Activated T-helper 1 cell treated with anti-CD3 and anti-CD28 coated beads, Interleukin-12 subunit alpha, Interleukin-12 subunit beta, Interleukin-2, Interleukin-4 antibody, amounts not matched to agents 30 ng/mL and 10 ng/mL and 1 ng/mL, durations not matched to agents 14 hours and 24 hours and 36 hours (primary cell): ENCODE measurements at regions of chr17 and their contacts with region 1.

Region 1: GRCh38 chr17:27578718-27579085 is 52.3 kb upstream of the LGALS9 start:
- DNase-seq: peak; percentile 62
- H3K4me3 Mint-ChIP-seq: peak overlapping the region; percentile 3
- H3K27ac Mint-ChIP-seq: peak overlapping the region; percentile 90
- H3K4me1 Mint-ChIP-seq: peaks cover 77% of the 10 kb centered on the region
- H3K27me3 Mint-ChIP-seq: no peaks in the 10 kb centered on the region

Region 2: DNA sequence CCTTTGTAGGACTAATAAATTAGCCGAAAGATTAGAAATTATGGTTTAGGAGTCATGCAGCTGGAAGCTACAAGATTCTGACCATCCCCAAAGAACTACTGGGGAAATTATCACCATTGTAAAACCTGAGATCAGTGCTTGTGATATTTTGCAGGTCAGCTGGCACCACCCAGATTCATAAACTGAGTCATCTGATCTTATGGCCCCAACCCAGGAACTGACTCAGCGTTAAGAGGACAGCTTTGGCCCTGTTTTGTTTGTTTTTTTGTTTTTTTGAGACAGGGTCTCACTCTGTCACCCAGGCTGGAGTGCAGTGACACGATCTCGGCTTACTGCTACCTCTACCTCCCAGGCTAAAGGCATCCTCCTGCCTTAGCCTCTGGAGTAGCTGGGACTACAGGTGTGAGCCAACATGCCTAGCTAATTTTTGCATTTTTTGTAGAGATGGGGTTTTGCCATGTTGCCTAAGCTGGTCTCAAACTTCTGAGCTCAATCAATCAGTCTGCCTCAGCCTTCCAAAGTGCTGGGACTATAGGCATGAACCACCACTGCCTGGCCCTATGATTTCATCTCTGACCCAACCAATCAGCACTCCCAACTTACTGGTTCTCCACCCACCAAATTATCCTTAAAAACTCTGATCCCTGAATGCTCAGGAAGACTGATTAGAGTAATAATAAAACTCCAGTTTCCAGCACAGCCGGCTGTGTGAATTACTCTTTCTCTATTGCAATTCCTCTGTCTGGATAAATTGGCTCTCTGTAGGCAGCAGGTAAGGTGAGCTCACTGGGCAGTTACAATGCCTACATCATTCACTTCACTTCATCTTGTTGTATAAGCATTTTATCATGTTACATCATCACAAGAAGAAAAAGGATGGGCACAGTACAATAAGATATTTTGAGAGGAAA is 201.8 kb before region 1 on chr17:
- intact Hi-C with region 1: no loop called
- DNase-seq: no peak
- H3K4me3 Mint-ChIP-seq: no peak overlapping the region
- H3K27ac Mint-ChIP-seq: no peak overlapping the region
- H3K4me1 Mint-ChIP-seq: peaks cover 7% of the 10 kb centered on the region
- H3K27me3 Mint-ChIP-seq: peaks cover 25% of the 10 kb centered on the region

Region 3: DNA sequence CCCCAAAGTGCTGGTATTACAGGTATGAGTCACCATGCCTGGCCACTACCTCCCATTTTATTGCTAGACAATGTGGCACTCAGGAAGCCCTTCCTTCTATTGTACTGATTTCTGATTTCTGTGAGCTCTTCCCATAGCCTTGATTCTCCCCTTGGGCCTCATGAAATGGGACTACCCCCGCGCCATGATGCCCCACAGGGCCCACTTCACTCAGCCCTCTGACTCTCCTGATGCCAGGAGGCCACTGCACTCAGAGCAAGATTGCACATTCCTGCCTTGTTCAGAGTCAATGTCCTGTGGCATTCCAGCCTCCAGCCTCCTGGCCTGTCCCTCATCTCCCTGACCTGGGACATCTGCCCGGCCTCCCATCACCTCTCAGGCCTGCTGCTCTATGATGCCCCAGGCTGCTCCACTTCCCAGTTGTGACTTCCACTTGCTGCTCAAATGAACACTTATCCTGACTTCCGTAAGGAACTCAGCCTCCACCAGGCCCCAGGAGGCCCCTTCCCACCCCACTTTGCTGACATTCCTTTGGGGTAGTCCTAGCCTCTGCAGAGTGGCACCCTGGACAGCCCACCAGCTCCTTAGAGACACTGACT is 189.1 kb before region 1 on chr17:
- intact Hi-C with region 1: loop called (anchors 2 kb)
- DNase-seq: no peak
- H3K4me3 Mint-ChIP-seq: no peak overlapping the region
- H3K27ac Mint-ChIP-seq: no peak overlapping the region
- H3K4me1 Mint-ChIP-seq: no peaks in the 10 kb centered on the region
- H3K27me3 Mint-ChIP-seq: peaks cover 22% of the 10 kb centered on the region

Region 4: DNA sequence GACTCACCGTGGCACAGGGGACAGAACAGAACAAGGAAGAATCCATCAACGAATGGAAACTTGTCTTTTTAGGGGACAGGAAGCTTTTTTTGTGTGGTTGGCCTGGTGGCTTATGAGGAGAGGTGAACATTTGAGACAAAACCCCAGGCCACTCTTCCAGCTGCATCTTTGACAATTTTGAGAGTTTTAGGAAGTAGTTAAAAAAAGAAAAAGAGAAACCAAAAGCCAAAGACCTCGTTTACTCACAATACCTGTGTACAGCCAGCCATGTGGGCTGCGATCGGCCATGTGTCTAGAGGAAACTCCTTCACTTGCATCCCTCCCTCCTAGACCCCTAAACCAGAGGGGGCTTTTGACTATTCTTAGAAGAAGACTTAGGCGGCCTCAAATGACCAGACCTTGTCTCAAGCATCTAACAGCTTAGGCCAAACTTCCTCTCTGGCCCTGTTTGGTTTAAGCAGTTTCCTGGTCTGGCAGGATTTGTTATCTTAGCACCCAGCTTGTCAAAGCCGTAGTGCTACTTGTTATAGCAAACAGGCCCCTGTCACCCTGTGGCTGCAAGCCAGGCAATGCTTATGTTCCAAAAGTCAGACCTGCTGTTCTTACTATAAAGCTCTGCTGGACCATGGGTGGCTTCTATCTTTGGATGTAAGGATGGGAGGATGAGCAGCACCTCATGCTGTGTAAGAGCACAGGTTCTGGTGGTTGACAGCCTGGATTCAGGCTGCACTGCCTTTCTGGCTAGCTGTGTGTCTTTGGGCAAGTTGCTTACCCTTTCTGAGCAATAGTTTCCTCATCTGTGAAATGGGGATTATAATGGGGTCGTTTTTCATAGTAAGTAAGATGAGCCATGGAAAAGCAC is 104.7 kb before region 1 on chr17:
- intact Hi-C with region 1: loop called (anchors 1 kb)
- DNase-seq: peak; percentile 83
- H3K4me3 Mint-ChIP-seq: peak overlapping the region; percentile 58
- H3K27ac Mint-ChIP-seq: peak overlapping the region; percentile 97
- H3K4me1 Mint-ChIP-seq: peaks cover 95% of the 10 kb centered on the region
- H3K27me3 Mint-ChIP-seq: no peaks in the 10 kb centered on the region

Region 5: GRCh38 chr17:27526604-27527230 is 52.0 kb before region 1 on chr17:
- intact Hi-C with region 1: loop called (anchors 2 kb)
- DNase-seq: peak; percentile 54
- H3K4me3 Mint-ChIP-seq: peak overlapping the region; percentile 68
- H3K27ac Mint-ChIP-seq: peak overlapping the region; percentile 76
- H3K4me1 Mint-ChIP-seq: peaks cover 94% of the 10 kb centered on the region
- H3K27me3 Mint-ChIP-seq: no peaks in the 10 kb centered on the region

Region 6: DNA sequence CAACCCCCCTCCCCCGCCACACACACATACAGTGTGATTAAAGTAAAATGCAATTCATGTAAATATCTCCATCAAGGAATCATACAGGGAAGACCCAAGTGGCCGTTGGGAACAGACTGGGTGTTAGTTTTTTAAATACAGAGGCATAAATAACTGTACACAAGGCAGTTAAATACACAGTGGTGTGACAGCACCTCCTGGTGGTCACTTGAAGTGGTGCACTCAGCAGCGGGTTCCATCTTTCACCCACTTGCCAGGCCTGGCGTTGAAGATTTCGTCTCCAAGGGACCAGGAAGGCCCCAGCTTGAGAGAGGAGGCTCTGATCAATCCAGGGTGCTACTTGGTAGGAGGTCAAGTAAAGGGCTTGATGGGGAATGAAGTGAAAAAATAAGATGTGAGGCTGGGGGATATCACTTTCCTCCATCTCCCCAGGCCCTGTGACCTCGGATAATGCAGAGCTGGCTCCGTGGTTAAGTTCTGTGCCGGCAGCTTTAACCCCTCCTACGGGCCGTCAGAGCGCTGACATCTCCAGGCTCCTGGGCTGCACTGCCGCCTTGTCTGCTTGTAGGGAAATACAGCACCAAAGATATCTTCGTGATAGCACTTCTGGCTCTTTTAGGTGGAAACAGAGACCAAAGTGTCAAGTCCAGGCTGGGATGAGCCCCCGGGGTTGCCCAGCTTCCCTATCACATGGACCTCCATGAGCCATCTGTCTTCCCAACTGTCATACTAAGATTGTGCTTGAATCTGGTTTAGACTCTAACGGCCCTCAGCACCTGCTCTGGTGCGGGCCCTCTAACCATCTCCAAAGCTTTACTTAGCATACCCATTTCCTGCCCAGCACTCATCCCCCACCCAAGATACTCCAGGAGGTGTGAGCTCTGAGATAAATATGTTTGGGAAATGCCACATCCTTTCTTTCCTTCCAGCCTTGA is 73.0 kb after region 1 on chr17:
- intact Hi-C with region 1: no loop called
- DNase-seq: peak; percentile 39
- H3K4me3 Mint-ChIP-seq: no peak overlapping the region
- H3K27ac Mint-ChIP-seq: no peak overlapping the region
- H3K4me1 Mint-ChIP-seq: peaks cover 17% of the 10 kb centered on the region
- H3K27me3 Mint-ChIP-seq: no peaks in the 10 kb centered on the region